ENCODE measurements at regions of chr22 and their contacts with region 1.

Region 1: GRCh38 chr22:40552070-40552469 is 84.4 kb downstream of the MRTFA start:
- DNase-seq: peak; percentile 90 to 95 (median 93)
- ATAC-seq: peak; percentile 99
- H3K4me3 ChIP-seq: no peak overlapping the region
- H3K27ac ChIP-seq: peak overlapping the region; percentile 59; the same call in 1 of the 3 replicates
- H3K4me1 ChIP-seq: peaks cover 3 to 12% of the 10 kb centered on the region in 2 experiments; a peak in 4 of 5 replicates
- H3K27me3 ChIP-seq: no peaks in the 10 kb centered on the region
- CTCF ChIP-seq: peak; percentile 75 to 84 (median 84)
- EP300 ChIP-seq: peak; percentile 84
- POLR2A ChIP-seq: no peak
- RAD21 ChIP-seq: peak; percentile 79 to 92

Region 2: GRCh38 chr22:40436505-40437451 is 115.3 kb before region 1 on chr22:
- CTCF ChIA-PET with region 1: no interaction called
- POLR2A ChIA-PET with region 1: no interaction called
- in situ Hi-C with region 1: no loop called
- intact Hi-C with region 1: loop called (anchors 5 kb)
- DNase-seq: peak; percentile 57 to 84 (median 65)
- ATAC-seq: peak; percentile 95
- H3K4me3 ChIP-seq: no peak overlapping the region
- H3K27ac ChIP-seq: peak overlapping the region; percentile 81
- H3K4me1 ChIP-seq: peaks cover 0 to 23% of the 10 kb centered on the region in 2 experiments; a peak in 4 of 5 replicates
- H3K27me3 ChIP-seq: no peaks in the 10 kb centered on the region
- CTCF ChIP-seq: peak in 2 of 3 experiments; percentile 50 to 57; a peak in 2 of 6 replicates
- EP300 ChIP-seq: peak; percentile 22; the same call in 1 of the 2 replicates
- POLR2A ChIP-seq: no peak
- RAD21 ChIP-seq: peak; percentile 59 to 64

Region 3: GRCh38 chr22:40525249-40525884 is 26.7 kb before region 1 on chr22:
- CTCF ChIA-PET with region 1: no interaction called
- POLR2A ChIA-PET with region 1: no interaction called
- in situ Hi-C with region 1: no loop called
- intact Hi-C with region 1: loop called (anchors 2 kb)
- DNase-seq: peak in 3 of 4 experiments; percentile 20 to 66 (median 26)
- ATAC-seq: peak; percentile 86
- H3K4me3 ChIP-seq: no peak overlapping the region
- H3K27ac ChIP-seq: no peak overlapping the region
- H3K4me1 ChIP-seq: peaks cover 0 to 6% of the 10 kb centered on the region in 2 experiments; a peak in 1 of 5 replicates
- H3K27me3 ChIP-seq: no peaks in the 10 kb centered on the region
- CTCF ChIP-seq: peak; percentile 62 to 71 (median 70)
- EP300 ChIP-seq: no peak
- POLR2A ChIP-seq: no peak
- RAD21 ChIP-seq: peak; percentile 41 to 57; a peak in 3 of 4 replicates

Region 4: DNA sequence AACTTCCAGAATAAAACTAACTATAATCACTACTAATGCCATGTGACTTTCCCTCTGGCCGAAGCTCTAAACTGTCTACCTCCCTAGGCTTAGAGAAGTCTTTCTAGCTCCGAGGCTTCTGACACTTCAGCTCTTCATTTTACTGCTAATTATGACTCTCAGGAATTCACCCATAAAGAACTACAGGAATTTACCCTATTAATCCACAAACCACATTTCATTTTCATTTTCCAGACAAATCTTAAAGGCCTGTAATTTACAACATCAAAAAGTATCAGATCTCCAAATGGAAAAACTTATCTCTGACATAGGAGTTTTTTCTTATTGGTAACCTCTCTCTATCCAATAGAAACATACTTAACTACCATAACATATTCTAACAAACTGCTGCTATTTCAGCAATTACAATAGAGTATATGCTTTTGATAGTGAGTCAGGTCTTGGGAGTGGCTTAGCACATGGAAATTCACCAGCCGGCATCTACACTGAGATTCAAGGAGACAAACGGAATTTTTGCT is 51.1 kb after region 1 on chr22:
- CTCF ChIA-PET with region 1: no interaction called
- POLR2A ChIA-PET with region 1: no interaction called
- in situ Hi-C with region 1: no loop called
- intact Hi-C with region 1: no loop called
- DNase-seq: no peak
- ATAC-seq: no peak
- H3K4me3 ChIP-seq: no peak overlapping the region
- H3K27ac ChIP-seq: no peak overlapping the region
- H3K4me1 ChIP-seq: no peaks in the 10 kb centered on the region
- H3K27me3 ChIP-seq: no peaks in the 10 kb centered on the region
- CTCF ChIP-seq: no peak
- EP300 ChIP-seq: no peak
- POLR2A ChIP-seq: no peak
- RAD21 ChIP-seq: no peak

Region 5: GRCh38 chr22:40636380-40637182 is 84.5 kb after region 1 on chr22 and contains the start of gene MRTFA:
- CTCF ChIA-PET with region 1: no interaction called
- POLR2A ChIA-PET with region 1: no interaction called
- in situ Hi-C with region 1: loop called (anchors 10 kb)
- intact Hi-C with region 1: no loop called
- DNase-seq: peak; percentile 87 to 99 (median 92)
- ATAC-seq: peak; percentile 94
- H3K4me3 ChIP-seq: peak within 1 kb of the TSS; percentile 86
- H3K27ac ChIP-seq: peak within 1 kb of the TSS; percentile 94
- H3K4me1 ChIP-seq: peaks cover 13 to 23% of the 10 kb centered on the region in 2 experiments; a peak in 4 of 5 replicates
- H3K27me3 ChIP-seq: no peaks in the 10 kb centered on the region
- CTCF ChIP-seq: no peak
- EP300 ChIP-seq: 0 out of 2 replicates have a peak, but pooled peaks have one; percentile 3
- POLR2A ChIP-seq: peak; percentile 84
- RAD21 ChIP-seq: 0 out of 4 replicates have a peak, but pooled peaks of 1 of the 2 experiments have one; percentile 6
- polyA plus RNA-seq, gene MRTFA: 0.84 to 0.97 TPM

Region 6: DNA sequence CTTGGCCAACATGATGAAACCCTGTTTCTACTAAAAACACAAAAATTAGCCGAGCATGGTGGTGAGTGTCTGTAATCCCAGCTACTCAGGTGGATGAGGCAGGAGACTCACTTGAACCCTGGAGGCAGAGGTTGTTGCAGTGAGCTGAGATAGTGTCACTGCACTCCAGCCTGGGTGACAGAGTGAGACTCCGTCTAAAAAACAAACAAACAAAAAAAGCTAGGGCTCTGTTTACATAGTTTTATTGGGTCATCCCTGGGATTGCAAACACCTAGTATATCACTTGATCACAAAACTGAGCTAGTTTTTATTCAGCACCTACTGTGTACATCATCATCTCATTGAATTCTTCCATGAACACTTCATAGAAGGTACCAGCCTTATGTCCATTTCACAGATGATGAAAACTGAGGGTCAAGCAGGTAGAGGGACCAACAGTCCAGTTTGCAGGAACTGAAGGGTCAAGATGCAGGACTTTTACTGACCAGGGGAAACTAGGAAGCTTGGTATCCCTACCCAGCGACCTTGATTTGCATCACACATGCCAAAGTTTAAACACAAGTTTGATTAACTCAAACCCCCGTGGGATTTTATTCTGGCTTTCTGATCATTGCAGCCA is 93.6 kb after region 1 on chr22:
- CTCF ChIA-PET with region 1: interaction called, 5 read pairs
- POLR2A ChIA-PET with region 1: no interaction called
- in situ Hi-C with region 1: loop called (anchors 10 kb)
- intact Hi-C with region 1: loop called (anchors 1 kb)
- DNase-seq: peak in 1 of 4 experiments; percentile 10
- ATAC-seq: no peak
- H3K4me3 ChIP-seq: no peak overlapping the region
- H3K27ac ChIP-seq: no peak overlapping the region
- H3K4me1 ChIP-seq: peaks cover 8 to 13% of the 10 kb centered on the region in 2 experiments; a peak in 4 of 5 replicates
- H3K27me3 ChIP-seq: no peaks in the 10 kb centered on the region
- CTCF ChIP-seq: no peak
- EP300 ChIP-seq: no peak
- POLR2A ChIP-seq: no peak
- RAD21 ChIP-seq: no peak

Region 7: GRCh38 chr22:40898850-40899357 is 346.8 kb after region 1 on chr22:
- CTCF ChIA-PET with region 1: no interaction called
- POLR2A ChIA-PET with region 1: no interaction called
- in situ Hi-C with region 1: loop called (anchors 10 kb)
- intact Hi-C with region 1: no loop called
- DNase-seq: peak; percentile 23 to 66 (median 34)
- ATAC-seq: peak; percentile 74
- H3K4me3 ChIP-seq: no peak overlapping the region
- H3K27ac ChIP-seq: 0 out of 3 replicates have a peak overlapping the region, but pooled peaks have one; percentile 38
- H3K4me1 ChIP-seq: peaks cover 0 to 4% of the 10 kb centered on the region in 2 experiments; a peak in 2 of 5 replicates
- H3K27me3 ChIP-seq: no peaks in the 10 kb centered on the region
- CTCF ChIP-seq: peak; percentile 37 to 71 (median 58); a peak in 5 of 6 replicates
- EP300 ChIP-seq: no peak
- POLR2A ChIP-seq: no peak
- RAD21 ChIP-seq: peak; percentile 65 to 75